CD14-positive monocyte (primary cell): ENCODE measurements at regions of chr7 and their contacts with region 1.

Region 1: DNA sequence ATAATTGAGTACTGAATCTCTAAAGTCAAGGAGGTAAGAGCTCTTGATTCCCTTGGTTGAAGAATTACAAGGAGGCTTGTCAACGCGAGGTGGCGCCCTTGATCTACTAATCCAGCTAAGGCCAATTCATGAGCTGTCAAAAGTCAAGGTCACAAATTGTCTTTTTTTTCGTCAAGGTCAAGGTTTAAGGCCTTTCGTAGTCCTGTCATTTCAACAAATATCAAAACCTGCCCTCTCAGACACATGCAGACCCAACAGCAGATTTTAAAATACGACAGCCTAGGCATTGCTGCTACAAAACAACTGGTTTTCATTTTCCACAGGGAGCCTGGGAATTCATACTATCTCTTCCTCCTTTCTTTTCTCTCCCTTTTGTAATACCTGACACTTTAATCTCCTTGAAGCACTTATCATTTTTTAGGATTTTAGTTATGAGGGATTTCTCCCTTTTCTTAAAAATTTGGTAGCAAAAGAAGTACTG is 3.6 kb downstream of the HOXA13 start:
- DNase-seq: peak; percentile 58 to 77 (median 74)
- H3K4me3 ChIP-seq: no peak overlapping the region
- H3K4me3 Mint-ChIP-seq: peak overlapping the region in 1 of 2 donors; percentile 84
- H3K27ac ChIP-seq: no peak overlapping the region
- H3K27ac Mint-ChIP-seq: no peak overlapping the region
- H3K4me1 ChIP-seq: peaks cover 38 to 47% of the 10 kb centered on the region in 2 donors
- H3K4me1 Mint-ChIP-seq: peaks cover 51% of the 10 kb centered on the region
- H3K27me3 ChIP-seq: peaks cover 86 to 92% of the 10 kb centered on the region in 2 donors
- H3K27me3 Mint-ChIP-seq: peaks cover 84 to 91% (median 87%) of the 10 kb centered on the region in 3 donors
- CTCF ChIP-seq: peak; percentile 96

Region 2: GRCh38 chr7:27095897-27096767 is 100.2 kb before region 1 on chr7 and contains the start of gene HOXA1:
- intact Hi-C with region 1: no loop called
- DNase-seq: peak; percentile 92 to 96 (median 94)
- H3K4me3 ChIP-seq: peak within 1 kb of the TSS; percentile 79 to 90 (median 88)
- H3K4me3 Mint-ChIP-seq: peak within 1 kb of the TSS; percentile 89 to 95
- H3K27ac ChIP-seq: peak within 1 kb of the TSS; percentile 82 to 92
- H3K27ac Mint-ChIP-seq: peak within 1 kb of the TSS; percentile 82 to 95 (median 93)
- H3K4me1 ChIP-seq: peaks cover 39 to 42% of the 10 kb centered on the region in 2 donors
- H3K4me1 Mint-ChIP-seq: peaks cover 51% of the 10 kb centered on the region
- H3K27me3 ChIP-seq: peaks cover 56 to 83% of the 10 kb centered on the region in 2 donors
- H3K27me3 Mint-ChIP-seq: peaks cover 74 to 88% (median 77%) of the 10 kb centered on the region in 3 donors
- CTCF ChIP-seq: no peak
- polyA plus RNA-seq, gene HOXA1: 0.11 to 0.37 TPM in 2 of 3 donors, not detected in the other

Region 3: DNA sequence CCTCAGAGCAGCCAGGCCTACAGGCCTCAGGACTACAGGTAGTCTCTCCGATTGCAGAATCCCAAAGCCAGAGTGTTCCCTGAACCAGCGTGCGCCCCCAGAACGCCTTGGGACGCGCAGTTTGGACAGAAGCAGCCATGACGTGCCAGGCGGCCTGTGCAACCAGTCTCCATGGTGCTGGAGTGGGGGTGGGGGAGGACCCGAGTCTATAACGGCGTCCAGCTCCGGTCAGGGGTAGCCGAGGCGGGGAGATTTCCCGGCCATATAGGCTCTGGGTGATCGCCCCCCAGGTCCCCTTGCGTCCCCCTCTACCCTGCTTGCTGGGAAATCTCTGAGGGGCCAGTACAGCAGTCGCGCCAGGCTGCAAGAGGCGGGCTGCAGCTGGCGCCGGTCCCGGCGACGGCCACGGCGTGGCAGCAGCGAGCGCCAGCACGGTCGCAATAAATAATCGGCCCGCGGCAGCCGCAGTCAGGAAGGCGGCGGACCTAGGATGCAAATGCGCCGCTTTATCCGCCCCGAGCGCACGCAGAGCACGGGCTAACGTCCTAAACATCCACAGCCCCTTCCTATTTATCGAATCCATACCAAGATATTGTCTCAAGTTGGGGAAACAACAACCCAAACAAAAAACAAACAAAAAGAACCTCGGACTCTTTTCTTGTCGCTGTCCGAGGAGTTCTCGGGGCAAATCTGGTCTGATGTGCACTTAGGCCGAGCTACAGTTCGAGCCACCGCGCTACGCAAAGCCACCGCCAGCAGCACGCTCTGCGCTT is 45.6 kb before region 1 on chr7:
- intact Hi-C with region 1: no loop called
- DNase-seq: peak; percentile 64 to 70 (median 69)
- H3K4me3 ChIP-seq: peak overlapping the region in 2 of 3 experiments; percentile 14 to 66
- H3K4me3 Mint-ChIP-seq: peak overlapping the region; percentile 78 to 94
- H3K27ac ChIP-seq: no peak overlapping the region
- H3K27ac Mint-ChIP-seq: no peak overlapping the region
- H3K4me1 ChIP-seq: peaks cover 56 to 61% of the 10 kb centered on the region in 2 donors
- H3K4me1 Mint-ChIP-seq: peaks cover 59% of the 10 kb centered on the region
- H3K27me3 ChIP-seq: peaks cover 92 to 100% of the 10 kb centered on the region in 2 donors
- H3K27me3 Mint-ChIP-seq: peaks cover 94 to 100% (median 99%) of the 10 kb centered on the region in 3 donors
- CTCF ChIP-seq: peak; percentile 90

Region 4: DNA sequence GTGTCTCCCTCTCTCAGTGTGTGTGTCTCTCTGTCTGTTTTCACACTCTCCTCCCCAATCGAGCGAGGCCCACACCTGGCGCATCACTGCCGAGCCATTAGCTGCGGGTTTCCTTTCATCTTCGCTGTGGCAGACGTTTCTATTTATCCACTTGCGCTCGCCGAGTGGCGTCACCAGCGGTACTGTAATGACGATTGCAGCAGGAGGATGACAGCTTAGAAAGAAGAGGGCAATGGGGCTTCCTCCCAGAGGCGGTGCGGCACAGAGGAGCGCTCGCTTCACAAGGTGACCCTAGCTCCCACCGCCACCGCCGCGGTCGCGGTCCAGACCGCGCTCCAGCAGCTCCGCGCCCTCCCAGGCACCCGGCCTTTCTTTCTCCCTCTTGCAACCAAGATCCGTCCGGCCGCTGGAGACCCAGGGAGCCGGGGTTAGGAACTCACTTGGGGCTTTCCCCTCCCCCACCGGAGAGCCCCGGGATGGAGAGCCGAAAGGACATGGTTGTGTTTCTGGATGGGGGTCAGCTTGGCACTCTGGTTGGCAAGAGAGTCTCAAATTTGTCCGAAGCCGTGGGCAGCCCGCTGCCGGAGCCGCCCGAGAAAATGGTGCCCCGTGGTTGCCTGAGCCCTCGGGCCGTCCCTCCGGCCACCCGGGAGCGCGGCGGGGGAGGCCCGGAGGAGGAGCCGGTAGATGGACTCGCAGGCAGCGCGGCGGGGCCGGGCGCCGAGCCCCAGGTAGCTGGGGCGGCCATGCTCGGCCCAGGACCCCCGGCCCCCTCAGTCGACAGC is 46.4 kb after region 1 on chr7 and contains the start of gene EVX1:
- intact Hi-C with region 1: loop called in 1 of 2 experiments (anchors 5 kb)
- DNase-seq: no peak
- H3K4me3 ChIP-seq: no peak within 1 kb of the TSS
- H3K4me3 Mint-ChIP-seq: peak within 1 kb of the TSS; percentile 34 to 88
- H3K27ac ChIP-seq: no peak within 1 kb of the TSS
- H3K27ac Mint-ChIP-seq: peak within 1 kb of the TSS in 1 of 7 donors; percentile 13
- H3K4me1 ChIP-seq: peaks cover 14 to 24% of the 10 kb centered on the region in 2 donors
- H3K4me1 Mint-ChIP-seq: peaks cover 31% of the 10 kb centered on the region
- H3K27me3 ChIP-seq: peaks cover 93 to 97% of the 10 kb centered on the region in 2 donors
- H3K27me3 Mint-ChIP-seq: peaks cover 95 to 98% (median 96%) of the 10 kb centered on the region in 3 donors
- CTCF ChIP-seq: no peak
- polyA plus RNA-seq, gene EVX1: not detected

Region 5: GRCh38 chr7:27419581-27420177 is 223.4 kb after region 1 on chr7:
- intact Hi-C with region 1: no loop called
- DNase-seq: no peak
- H3K4me3 ChIP-seq: no peak overlapping the region
- H3K4me3 Mint-ChIP-seq: no peak overlapping the region
- H3K27ac ChIP-seq: no peak overlapping the region
- H3K27ac Mint-ChIP-seq: no peak overlapping the region
- H3K4me1 ChIP-seq: no peaks in the 10 kb centered on the region
- H3K4me1 Mint-ChIP-seq: peaks cover 4% of the 10 kb centered on the region
- H3K27me3 ChIP-seq: no peaks in the 10 kb centered on the region
- H3K27me3 Mint-ChIP-seq: peaks cover 2 to 11% (median 9%) of the 10 kb centered on the region in 3 donors
- CTCF ChIP-seq: no peak

Region 6: DNA sequence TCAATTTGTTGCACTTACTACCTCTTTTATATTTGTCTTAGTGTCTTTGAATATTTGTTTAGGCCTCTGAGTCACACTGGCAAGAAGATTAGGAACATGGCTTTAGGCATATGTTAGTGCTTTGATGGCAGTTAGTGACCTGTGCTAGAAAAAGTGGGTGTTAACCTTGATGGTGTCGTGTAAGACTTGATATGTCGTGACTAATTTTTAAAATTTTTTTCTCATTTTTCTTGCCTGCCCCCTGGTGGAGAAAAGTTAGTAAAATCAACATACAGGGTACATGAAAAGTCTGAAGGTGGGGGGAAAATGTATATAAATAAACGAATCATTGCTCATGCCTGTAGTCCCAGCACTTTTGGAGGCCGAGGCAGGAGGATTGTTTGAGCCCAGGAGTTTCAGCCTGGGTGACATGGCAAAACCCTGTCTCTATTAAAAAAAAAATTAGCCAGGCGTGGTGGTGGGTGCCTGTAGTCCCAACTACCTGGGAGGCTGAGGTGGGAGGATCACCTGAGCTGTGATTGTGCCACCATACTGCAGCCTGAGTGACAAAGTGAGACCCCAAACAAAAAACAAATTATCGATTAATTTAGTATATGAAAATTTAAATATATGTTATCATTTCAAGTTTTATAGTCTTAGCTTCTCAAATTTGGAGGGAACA is 588.2 kb after region 1 on chr7:
- intact Hi-C with region 1: loop called (anchors 10 kb)
- DNase-seq: peak; percentile 23 to 41 (median 24)
- H3K4me3 ChIP-seq: no peak overlapping the region
- H3K4me3 Mint-ChIP-seq: no peak overlapping the region
- H3K27ac ChIP-seq: no peak overlapping the region
- H3K27ac Mint-ChIP-seq: peak overlapping the region in 1 of 7 donors; percentile 47
- H3K4me1 ChIP-seq: no peaks in the 10 kb centered on the region
- H3K4me1 Mint-ChIP-seq: no peaks in the 10 kb centered on the region
- H3K27me3 ChIP-seq: no peaks in the 10 kb centered on the region
- H3K27me3 Mint-ChIP-seq: peaks cover 0 to 1% (median 0%) of the 10 kb centered on the region in 3 donors
- CTCF ChIP-seq: peak; percentile 75

Region 7: DNA sequence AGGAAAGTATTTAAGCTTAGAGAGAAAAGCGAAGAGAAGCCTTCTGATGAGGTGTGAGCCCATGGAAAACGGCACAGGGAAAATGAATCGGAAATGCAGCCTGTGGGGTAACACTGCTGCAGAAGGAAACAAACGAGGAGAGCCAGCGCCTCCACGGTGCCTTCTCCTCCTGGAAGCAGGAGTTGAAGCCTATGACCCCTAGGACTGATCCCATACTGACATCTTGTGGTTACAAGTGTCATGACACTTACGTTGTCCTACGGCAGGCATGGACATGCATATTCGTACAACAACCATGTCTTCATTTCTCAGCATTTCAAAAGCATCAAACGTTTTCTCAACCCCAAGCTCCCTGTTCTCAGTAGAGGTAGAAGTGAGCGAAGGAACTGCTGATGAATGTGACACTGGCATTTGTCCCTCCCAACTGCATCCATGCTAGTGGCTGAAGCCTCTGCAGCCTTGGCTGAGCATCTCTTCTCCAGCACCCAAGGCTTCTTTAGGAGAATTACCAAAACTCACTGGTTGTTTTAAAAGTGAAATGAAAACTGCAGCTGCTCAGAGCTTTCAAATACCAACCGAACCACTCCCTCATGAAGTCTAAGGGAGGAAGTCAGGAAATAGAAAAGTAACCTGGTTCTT is 824.1 kb after region 1 on chr7:
- intact Hi-C with region 1: loop called in 1 of 2 experiments (anchors 5 kb)
- DNase-seq: peak; percentile 42 to 61 (median 59)
- H3K4me3 ChIP-seq: no peak overlapping the region
- H3K4me3 Mint-ChIP-seq: peak overlapping the region in 1 of 2 donors; percentile 24
- H3K27ac ChIP-seq: no peak overlapping the region
- H3K27ac Mint-ChIP-seq: no peak overlapping the region
- H3K4me1 ChIP-seq: no peaks in the 10 kb centered on the region
- H3K4me1 Mint-ChIP-seq: peaks cover 21% of the 10 kb centered on the region
- H3K27me3 ChIP-seq: no peaks in the 10 kb centered on the region
- H3K27me3 Mint-ChIP-seq: no peaks in the 10 kb centered on the region
- CTCF ChIP-seq: peak; percentile 91